ENCODE measurements at regions of chr5 and their contacts with region 1.

Region 1: DNA sequence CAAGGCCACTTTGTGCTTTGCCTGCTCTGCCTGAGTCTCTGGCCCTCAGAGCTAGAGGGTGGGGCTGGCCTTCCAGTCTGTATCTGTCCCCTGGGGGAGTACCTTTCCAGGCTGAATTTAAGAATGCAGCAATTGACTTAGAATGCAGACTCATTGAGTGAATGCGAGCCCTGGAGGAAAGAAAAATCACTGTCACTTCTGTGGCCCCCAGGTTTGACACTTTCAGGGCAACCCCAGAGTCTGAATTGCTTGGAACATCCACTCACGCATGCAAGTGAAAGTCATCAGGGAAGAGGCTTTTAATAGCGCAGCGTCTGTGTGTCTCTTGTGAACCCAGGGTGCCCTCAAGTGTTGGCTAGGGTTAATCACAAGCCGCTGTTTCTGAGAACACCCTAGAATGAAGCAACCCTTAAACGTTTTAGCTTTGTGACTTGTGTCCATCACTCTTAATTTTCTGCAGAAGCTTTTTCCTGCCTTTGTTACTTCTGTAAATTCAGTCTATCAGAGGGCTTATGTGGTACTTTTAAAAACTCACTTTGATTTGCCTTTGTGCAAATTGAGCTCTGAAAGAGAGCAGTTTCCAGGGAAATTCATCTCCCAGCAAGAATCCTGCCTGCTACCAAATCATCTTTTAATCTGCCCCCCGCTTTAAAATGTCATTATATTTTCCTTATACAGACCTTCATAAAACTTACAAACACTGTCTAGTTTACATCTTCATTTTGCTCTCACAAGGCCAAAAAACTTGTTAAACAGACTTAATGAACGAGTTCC is 146.8 kb upstream of the IQGAP2 start:
- DNase-seq: peak; percentile 71
- H3K4me3 ChIP-seq: peak overlapping the region in 1 of 2 experiments; percentile 28; a peak in 1 of 4 replicates
- H3K27ac ChIP-seq: peak overlapping the region in 1 of 2 experiments; percentile 31; a peak in 1 of 4 replicates
- H3K4me1 ChIP-seq: peaks cover 0 to 9% of the 10 kb centered on the region in 2 experiments; a peak in 1 of 4 replicates
- H3K27me3 ChIP-seq: no peaks in the 10 kb centered on the region
- CTCF ChIP-seq: peak; percentile 69
- EP300 ChIP-seq: no peak
- RAD21 ChIP-seq: peak; percentile 98

Region 2: DNA sequence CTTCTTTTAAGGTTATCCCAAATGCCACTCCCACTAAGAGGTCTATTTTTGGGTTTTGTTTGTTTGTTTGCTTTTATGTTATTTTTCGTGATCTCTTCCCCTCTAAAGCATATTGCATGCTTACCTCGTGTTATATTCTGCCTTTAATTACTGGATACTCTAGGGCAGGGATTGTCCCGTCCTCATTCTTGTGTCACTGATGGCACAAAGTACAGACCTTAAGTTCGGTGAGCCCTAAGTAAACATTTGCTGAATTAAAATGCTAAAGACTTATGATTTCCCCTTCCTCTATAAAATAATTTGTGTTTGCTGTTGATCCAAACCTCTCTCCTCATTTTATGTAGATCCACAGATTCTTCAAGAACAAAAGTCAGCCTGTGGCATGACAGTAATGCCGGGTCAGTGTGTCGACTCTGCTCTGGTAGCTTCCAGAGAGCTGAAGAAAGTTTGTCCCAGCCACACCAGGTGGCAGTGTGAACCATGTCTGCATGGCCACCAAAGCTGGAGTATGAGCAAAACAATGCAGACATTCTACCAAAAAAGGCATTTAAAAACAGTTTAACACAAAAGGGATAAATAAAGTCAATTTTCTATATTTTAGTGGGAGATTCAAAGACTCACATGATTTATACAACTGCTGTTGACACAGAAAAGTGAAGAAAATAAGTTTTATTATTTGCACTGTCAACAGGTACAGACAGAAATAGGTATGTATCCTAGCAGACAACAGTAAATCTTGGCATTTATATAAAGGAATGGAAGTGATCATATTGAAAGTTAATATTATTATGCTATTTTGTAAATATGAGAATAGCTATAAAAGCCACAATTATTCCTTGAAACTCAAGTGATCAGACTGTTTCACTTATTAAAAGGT is 521.2 kb before region 1 on chr5:
- CTCF ChIA-PET with region 1: interaction called, 62 read pairs
- POLR2A ChIA-PET with region 1: no interaction called
- DNase-seq: peak; percentile 63
- H3K4me3 ChIP-seq: no peak overlapping the region
- H3K27ac ChIP-seq: no peak overlapping the region
- H3K4me1 ChIP-seq: no peaks in the 10 kb centered on the region; a peak in 1 of 4 replicates
- H3K27me3 ChIP-seq: no peaks in the 10 kb centered on the region
- CTCF ChIP-seq: peak; percentile 54
- EP300 ChIP-seq: no peak
- RAD21 ChIP-seq: peak; percentile 92

Region 3: GRCh38 chr5:75818661-75819060 is 437.6 kb before region 1 on chr5:
- CTCF ChIA-PET with region 1: no interaction called
- POLR2A ChIA-PET with region 1: no interaction called
- DNase-seq: no peak
- H3K4me3 ChIP-seq: no peak overlapping the region
- H3K27ac ChIP-seq: no peak overlapping the region
- H3K4me1 ChIP-seq: no peaks in the 10 kb centered on the region
- H3K27me3 ChIP-seq: no peaks in the 10 kb centered on the region
- CTCF ChIP-seq: no peak
- EP300 ChIP-seq: no peak
- RAD21 ChIP-seq: no peak

Region 4: DNA sequence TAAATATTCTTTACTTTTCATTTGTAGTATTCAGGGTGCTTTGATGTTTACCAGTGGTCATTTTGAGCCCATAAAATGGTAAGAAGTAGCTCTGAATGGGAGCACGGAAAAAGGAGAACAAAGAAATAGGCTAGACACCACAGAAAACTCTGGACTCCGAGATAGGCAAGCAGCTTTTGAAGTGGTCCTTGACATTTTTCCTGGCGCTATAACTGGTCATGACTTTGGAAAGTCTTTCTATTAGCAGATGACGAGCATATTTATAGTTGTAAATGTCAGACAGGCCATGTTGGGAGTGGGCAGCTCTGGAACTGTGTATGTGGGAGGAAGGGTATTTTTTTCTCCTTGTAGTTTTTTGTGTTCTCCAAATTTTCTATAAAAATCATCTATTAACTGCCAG is 413.0 kb before region 1 on chr5:
- CTCF ChIA-PET with region 1: no interaction called
- POLR2A ChIA-PET with region 1: no interaction called
- DNase-seq: no peak
- H3K4me3 ChIP-seq: no peak overlapping the region
- H3K27ac ChIP-seq: no peak overlapping the region
- H3K4me1 ChIP-seq: no peaks in the 10 kb centered on the region
- H3K27me3 ChIP-seq: no peaks in the 10 kb centered on the region
- CTCF ChIP-seq: no peak
- EP300 ChIP-seq: no peak
- RAD21 ChIP-seq: no peak

Region 5: GRCh38 chr5:75885849-75886598 is 370.3 kb before region 1 on chr5:
- CTCF ChIA-PET with region 1: interaction called, 69 read pairs
- POLR2A ChIA-PET with region 1: no interaction called
- DNase-seq: peak; percentile 17
- H3K4me3 ChIP-seq: no peak overlapping the region
- H3K27ac ChIP-seq: no peak overlapping the region
- H3K4me1 ChIP-seq: peaks cover 0 to 4% of the 10 kb centered on the region in 2 experiments; a peak in 2 of 4 replicates
- H3K27me3 ChIP-seq: no peaks in the 10 kb centered on the region
- CTCF ChIP-seq: 0 out of 2 replicates have a peak, but pooled peaks have one; percentile 19
- EP300 ChIP-seq: no peak
- RAD21 ChIP-seq: peak; percentile 80

Region 6: GRCh38 chr5:76082772-76083554 is 173.3 kb before region 1 on chr5 and contains the start of gene SV2C:
- CTCF ChIA-PET with region 1: interaction called, 11 read pairs
- POLR2A ChIA-PET with region 1: no interaction called
- DNase-seq: peak; percentile 89
- H3K4me3 ChIP-seq: peak within 1 kb of the TSS; percentile 16 to 55; a peak in 3 of 4 replicates
- H3K27ac ChIP-seq: peak within 1 kb of the TSS in 1 of 2 experiments; percentile 98; a peak in 2 of 4 replicates
- H3K4me1 ChIP-seq: peaks cover 0 to 2% of the 10 kb centered on the region in 2 experiments; a peak in 2 of 4 replicates
- H3K27me3 ChIP-seq: peaks cover 28% of the 10 kb centered on the region
- CTCF ChIP-seq: no peak
- EP300 ChIP-seq: no peak
- RAD21 ChIP-seq: no peak
- polyA plus RNA-seq, gene SV2C: 0.05 and 0.13 TPM in 2 replicates

Region 7: DNA sequence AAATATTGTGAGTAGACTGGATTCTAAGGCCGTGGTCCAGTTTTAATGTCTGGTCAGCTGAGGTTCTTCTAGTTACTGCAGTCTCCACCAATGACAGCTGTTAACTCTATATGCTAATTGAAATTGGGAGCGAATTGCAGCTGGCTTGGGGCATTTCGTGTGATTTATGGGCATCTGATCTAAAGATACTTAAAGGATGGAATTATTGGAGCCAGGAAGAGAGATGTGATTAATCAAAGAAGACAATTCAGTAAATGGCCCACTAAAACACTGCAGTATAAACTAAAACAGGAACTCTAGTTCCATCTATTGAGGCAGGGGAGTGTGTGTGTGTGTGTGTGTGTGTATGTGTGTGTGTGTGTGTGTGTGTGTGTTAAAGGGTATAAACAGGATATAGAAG is 10.7 kb before region 1 on chr5:
- CTCF ChIA-PET with region 1: interaction called, 12 read pairs
- POLR2A ChIA-PET with region 1: no interaction called
- DNase-seq: peak; percentile 45
- H3K4me3 ChIP-seq: no peak overlapping the region
- H3K27ac ChIP-seq: no peak overlapping the region
- H3K4me1 ChIP-seq: peaks cover 0 to 8% of the 10 kb centered on the region in 2 experiments; a peak in 2 of 4 replicates
- H3K27me3 ChIP-seq: no peaks in the 10 kb centered on the region
- CTCF ChIP-seq: no peak
- EP300 ChIP-seq: peak in 1 of 2 experiments; percentile 49; a peak in 2 of 4 replicates
- RAD21 ChIP-seq: no peak

Region 8: GRCh38 chr5:76269932-76270610 is 13.8 kb after region 1 on chr5:
- CTCF ChIA-PET with region 1: interaction called, 17 read pairs
- POLR2A ChIA-PET with region 1: no interaction called
- DNase-seq: no peak
- H3K4me3 ChIP-seq: no peak overlapping the region
- H3K27ac ChIP-seq: no peak overlapping the region
- H3K4me1 ChIP-seq: peaks cover 0 to 6% of the 10 kb centered on the region in 2 experiments; a peak in 1 of 4 replicates
- H3K27me3 ChIP-seq: no peaks in the 10 kb centered on the region
- CTCF ChIP-seq: no peak
- EP300 ChIP-seq: no peak
- RAD21 ChIP-seq: no peak

Region 9: DNA sequence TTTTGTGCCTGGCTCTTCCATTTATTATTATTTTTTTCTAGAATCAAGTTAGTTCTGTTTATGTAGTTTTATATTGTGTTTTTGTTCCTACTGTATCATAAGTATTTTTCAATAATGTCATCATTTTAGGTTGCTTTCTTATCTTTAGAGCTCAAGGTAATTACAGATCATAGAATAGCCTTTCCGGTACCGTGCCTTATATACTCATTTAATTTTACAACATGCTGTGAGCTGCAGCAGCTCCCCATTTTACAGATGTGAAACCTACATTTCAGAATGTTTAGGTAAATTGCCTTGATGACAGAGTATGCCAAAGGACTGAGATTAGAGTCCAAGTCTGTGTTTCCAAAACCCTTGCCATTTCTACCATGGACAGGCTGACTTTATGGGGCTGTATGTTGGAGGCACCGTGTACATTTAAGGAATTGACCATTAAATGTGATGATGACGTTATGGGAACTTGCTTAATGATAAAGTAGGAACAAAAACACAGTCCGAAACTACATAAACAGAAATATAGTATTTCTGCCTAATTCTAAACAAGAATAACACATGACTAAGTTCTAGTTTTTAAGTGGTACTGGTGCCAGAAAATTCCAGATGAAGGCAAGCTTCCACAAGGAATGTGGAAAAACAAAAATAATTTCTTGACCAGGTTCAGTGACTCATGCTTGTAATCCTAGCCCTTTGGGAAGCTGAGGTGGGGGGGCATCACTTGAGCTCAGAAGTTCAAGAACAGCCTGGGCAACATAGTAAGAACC is 244.5 kb after region 1 on chr5:
- CTCF ChIA-PET with region 1: no interaction called
- POLR2A ChIA-PET with region 1: no interaction called
- DNase-seq: no peak
- H3K4me3 ChIP-seq: no peak overlapping the region
- H3K27ac ChIP-seq: peak overlapping the region in 1 of 2 experiments; percentile 31; a peak in 1 of 4 replicates
- H3K4me1 ChIP-seq: no peaks in the 10 kb centered on the region; a peak in 1 of 4 replicates
- H3K27me3 ChIP-seq: no peaks in the 10 kb centered on the region
- CTCF ChIP-seq: no peak
- EP300 ChIP-seq: no peak
- RAD21 ChIP-seq: no peak

Measured in SK-N-SH (cell line).